Thyroid gland (tissue), 4 donors: ENCODE measurements at regions of chr1 and their contacts with region 1.

Region 1: DNA sequence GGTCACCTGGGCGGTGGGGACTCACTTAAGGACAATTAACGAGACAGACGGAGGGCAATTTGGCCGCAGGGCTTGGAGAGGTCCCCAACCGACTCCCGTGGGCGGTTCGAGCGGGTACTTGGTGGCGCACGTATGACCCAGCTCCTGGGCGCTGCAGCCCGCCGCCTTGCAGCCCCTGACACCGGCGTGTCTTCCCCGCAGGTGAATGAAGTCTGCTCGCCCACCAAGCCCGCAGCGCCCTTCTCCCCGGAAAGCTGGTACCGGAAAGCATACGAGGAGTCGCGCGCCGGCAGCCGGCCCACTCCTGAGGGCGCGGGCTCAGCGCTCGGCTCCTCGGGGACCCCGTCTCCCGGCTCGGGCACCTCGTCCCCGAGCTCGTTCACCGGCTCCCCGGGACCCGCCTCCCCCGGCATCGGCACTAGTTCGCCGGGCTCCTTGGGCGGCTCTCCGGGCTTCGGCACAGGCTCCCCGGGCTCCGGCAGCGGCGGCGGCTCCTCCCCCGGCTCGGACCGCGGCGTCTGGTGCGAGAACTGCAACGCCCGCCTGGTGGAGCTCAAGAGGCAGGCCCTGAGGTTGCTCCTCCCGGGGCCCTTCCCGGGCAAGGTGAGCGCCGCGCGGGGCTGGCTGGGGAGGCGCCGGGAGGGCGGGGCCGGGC is 1.4 kb downstream of the KIF26B start:
- DNase-seq: peak; percentile 89 to 92
- H3K4me3 ChIP-seq: peak overlapping the region; percentile 33 to 63 (median 47)
- H3K27ac ChIP-seq: no peak overlapping the region
- H3K4me1 ChIP-seq: peaks cover 17 to 24% of the 10 kb centered on the region in 2 donors
- H3K27me3 ChIP-seq: no peaks in the 10 kb centered on the region
- CTCF ChIP-seq: peak; percentile 32 to 92 (median 80)
- POLR2A ChIP-seq: peak in 1 of 2 donors; percentile 61

Region 2: GRCh38 chr1:245266105-245266504 is 109.9 kb after region 1 on chr1:
- intact Hi-C with region 1: loop called (anchors 5 kb)
- DNase-seq: no peak
- H3K4me3 ChIP-seq: no peak overlapping the region
- H3K27ac ChIP-seq: no peak overlapping the region
- H3K4me1 ChIP-seq: peaks cover 13 to 26% of the 10 kb centered on the region in 2 donors
- H3K27me3 ChIP-seq: no peaks in the 10 kb centered on the region
- CTCF ChIP-seq: no peak
- POLR2A ChIP-seq: no peak

Region 3: DNA sequence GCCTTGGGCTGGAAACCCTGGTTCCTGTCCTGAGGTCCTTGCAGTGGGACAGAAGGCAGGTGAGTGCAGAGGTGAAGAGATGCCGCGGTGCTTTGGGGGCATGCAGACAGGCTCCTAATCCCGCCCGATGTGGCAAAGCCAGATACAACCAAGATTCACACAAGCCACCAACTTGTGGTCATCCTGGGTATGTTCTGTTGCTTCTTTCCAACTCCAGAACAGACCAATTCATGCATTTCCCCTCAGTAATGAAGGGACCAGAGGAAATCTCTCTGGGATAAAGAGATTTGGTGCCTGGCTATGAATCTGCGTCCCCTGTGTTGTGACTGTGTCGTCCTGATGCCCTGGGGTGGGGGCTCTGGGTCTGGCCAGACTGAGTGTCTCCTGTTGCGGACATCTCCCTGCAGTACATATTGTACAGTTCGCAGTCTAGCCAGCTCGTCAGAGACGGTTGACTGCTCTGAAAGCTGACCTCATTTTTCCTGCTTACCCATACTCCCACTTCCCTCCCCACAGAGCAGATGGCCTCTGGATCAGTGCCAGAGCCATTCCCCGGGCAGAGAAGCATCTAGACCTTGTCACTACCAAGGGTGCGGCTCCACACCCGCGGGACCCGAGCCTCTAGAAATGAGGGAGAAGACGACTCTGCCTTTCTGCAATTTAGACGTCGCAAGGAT is 214.8 kb after region 1 on chr1:
- intact Hi-C with region 1: loop called (anchors 5 kb)
- DNase-seq: peak; percentile 11 to 33
- H3K4me3 ChIP-seq: no peak overlapping the region
- H3K27ac ChIP-seq: no peak overlapping the region
- H3K4me1 ChIP-seq: peaks cover 3 to 11% of the 10 kb centered on the region in 2 donors
- H3K27me3 ChIP-seq: no peaks in the 10 kb centered on the region
- CTCF ChIP-seq: no peak
- POLR2A ChIP-seq: no peak

Region 4: DNA sequence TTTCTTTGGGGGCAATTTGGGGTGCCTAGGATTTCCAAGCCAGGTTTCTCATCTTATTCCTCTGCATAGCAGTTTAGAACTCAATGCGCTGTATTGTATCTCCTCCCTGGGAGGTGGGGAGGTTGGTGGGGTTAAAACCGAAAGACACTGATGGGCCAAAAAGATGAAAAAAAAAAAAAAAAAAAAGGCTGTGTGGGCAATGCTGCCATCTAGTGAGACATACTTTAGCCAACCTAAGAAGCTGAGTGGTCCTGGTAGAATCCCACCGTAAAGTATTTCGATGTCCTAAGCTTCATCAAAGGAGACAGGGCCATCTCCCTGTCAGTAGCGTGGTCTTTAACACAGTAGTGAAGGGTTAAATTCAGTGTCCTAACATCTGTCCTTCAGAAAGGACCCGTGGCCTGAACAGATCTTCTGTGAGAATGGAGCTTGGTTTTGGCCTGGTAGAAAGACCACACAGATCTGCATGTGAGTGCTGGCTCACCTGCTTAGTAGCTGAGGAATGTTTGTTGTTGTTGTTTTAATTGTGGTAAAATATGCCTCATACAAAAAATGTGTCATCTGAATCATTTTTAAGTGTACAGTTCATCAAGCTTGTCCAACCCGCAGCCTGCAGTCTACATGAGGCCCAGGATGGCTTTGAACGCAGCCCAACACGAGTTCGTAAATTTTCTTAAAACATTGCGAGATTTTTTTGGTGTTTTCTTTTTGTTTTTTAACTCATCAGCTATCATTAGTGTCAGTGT is 224.8 kb after region 1 on chr1:
- intact Hi-C with region 1: loop called (anchors 5 kb)
- DNase-seq: no peak
- H3K4me3 ChIP-seq: no peak overlapping the region
- H3K27ac ChIP-seq: no peak overlapping the region
- H3K4me1 ChIP-seq: no peaks in the 10 kb centered on the region
- H3K27me3 ChIP-seq: no peaks in the 10 kb centered on the region
- CTCF ChIP-seq: peak in 4 of 6 experiments; percentile 13 to 67 (median 48)
- POLR2A ChIP-seq: no peak

Region 5: DNA sequence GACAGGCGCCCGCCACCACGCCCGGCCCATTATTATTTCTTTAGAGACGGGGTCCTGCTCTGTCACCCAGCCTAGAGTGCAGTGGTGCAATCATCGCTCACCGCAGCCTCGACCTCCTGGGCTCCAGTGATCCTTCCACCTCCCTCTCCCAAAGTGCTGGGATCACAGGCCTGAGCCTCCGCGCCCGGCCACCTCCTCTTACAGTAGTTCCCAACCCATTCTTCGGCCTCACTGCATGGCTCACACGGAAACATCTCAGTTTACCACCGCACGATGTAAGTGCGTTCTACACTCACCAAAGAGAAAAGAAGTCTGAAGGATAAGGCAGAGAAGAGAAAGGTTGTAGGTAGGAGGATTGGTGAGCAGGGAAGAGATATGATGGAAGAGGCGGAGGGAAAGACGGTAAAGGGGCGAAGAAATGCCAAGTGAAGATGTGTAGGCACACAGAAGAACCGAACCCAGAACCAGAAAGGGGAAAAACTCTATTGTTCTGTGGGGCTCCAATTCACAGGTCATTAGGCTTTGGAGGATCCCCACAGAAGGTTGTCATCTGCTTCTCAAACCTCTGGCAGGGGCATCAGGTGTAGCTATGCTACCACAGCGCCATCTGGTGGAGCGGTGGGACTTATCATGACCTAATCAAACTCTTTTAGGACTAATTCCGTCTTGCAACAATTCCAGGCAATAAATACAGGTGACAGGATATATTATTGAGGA is 846.7 kb after region 1 on chr1:
- intact Hi-C with region 1: loop called (anchors 5 kb)
- DNase-seq: peak; percentile 91 to 96
- H3K4me3 ChIP-seq: no peak overlapping the region
- H3K27ac ChIP-seq: no peak overlapping the region
- H3K4me1 ChIP-seq: peaks cover 7 to 18% of the 10 kb centered on the region in 2 donors
- H3K27me3 ChIP-seq: no peaks in the 10 kb centered on the region
- CTCF ChIP-seq: peak; percentile 75 to 88 (median 81)
- POLR2A ChIP-seq: no peak

Region 6: DNA sequence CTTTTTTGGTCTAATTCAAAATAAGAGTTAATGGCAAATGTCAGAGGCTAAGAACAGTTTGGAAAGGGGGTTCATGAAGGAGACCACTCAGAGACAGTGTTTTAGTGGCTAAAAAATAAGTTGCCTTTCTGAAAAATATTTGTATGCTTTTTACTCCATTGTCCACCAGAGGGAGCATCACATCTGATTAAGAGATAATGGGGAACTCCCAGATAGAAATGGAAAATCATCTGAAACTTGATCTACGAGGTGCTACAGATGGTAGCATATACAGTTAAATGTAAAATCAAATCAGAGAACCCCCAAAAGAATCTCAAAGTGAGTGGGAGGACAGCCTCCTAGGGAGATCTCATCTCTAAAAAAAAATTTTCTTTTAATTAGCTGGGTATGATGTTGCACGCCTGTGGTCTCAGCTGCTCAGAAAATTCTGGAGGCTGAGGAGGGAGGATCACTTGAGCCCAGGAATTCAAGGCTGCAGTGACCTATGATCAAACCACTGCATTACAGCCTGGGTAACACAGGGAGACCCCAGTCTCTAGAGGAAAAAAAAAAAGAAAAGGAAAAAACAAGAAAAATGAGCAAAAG is 1341.2 kb after region 1 on chr1:
- intact Hi-C with region 1: loop called (anchors 10 kb)
- DNase-seq: no peak
- H3K4me3 ChIP-seq: no peak overlapping the region
- H3K27ac ChIP-seq: no peak overlapping the region
- H3K4me1 ChIP-seq: peaks cover 0 to 5% of the 10 kb centered on the region in 2 donors
- H3K27me3 ChIP-seq: no peaks in the 10 kb centered on the region
- CTCF ChIP-seq: peak; percentile 25 to 85 (median 67)
- POLR2A ChIP-seq: no peak